ENCODE measurements at regions of chr7 and their contacts with region 1.

Region 1: DNA sequence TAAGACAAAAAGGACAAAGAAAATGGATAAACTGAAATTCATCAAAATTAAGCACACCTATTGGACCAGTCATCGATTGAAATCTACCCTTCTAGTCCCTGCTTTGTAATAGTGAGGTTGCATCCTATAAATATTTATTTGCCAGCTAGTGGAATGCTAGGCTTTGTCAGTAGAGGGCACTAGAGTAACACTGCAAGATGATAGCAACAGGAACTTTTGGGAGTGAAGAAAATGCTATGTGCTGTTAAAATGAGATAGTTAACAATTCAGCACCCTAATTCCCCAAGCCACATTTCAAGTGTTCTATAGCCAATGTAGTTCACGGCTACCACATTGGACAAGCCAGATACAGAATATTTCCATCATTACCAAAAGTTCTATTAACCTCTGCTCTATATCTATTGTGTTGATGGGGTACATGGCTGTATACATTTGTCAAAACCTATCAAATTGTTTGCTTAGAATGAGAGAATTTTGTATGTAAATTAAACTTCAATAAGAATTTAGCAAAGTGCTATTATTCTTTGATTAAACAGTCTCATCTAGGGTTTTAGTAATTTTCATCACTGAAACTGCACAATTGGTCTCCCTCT is 69.8 kb downstream of the LSMEM1 start:
- DNase-seq: peak; percentile 28
- ATAC-seq: peak; percentile 42
- H3K4me3 Mint-ChIP-seq: no peak overlapping the region
- H3K27ac Mint-ChIP-seq: no peak overlapping the region
- H3K4me1 Mint-ChIP-seq: no peaks in the 10 kb centered on the region
- H3K27me3 Mint-ChIP-seq: peaks cover 10% of the 10 kb centered on the region

Region 2: DNA sequence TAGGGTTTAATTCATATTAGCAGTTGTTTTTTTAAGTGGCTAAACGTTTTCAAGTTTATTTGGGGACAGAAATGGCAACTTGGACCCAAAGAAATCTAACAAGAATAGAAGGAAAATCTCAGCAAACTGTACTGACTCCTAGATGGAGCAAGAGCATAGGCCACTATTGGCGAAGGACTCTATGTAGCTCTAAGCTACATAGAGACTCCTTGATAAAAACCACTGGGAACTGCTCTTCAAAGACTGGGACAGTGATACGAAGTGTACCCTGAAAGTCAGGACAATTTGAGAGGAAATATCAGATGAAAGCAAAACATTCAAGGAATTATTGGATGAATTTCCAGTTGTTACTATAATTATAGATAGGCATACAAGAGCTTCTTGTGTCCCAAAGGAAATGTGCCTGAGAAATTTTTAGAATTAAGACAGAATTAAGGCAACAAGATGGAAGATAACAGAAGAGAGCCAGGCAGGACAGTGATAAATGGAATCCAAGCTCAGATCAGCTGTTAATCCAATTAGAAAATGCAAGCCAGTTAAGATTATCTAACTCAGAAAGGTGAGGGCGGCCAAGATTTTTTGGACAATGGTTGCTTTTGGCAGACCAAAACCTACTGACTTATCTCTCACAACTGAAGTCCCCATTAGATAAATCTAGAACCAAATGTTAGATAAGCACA is 204.0 kb before region 1 on chr7:
- CTCF ChIA-PET with region 1: no interaction called
- POLR2A ChIA-PET with region 1: no interaction called
- intact Hi-C with region 1: no loop called
- DNase-seq: no peak
- ATAC-seq: no peak
- H3K4me3 Mint-ChIP-seq: no peak overlapping the region
- H3K27ac Mint-ChIP-seq: no peak overlapping the region
- H3K4me1 Mint-ChIP-seq: no peaks in the 10 kb centered on the region
- H3K27me3 Mint-ChIP-seq: no peaks in the 10 kb centered on the region

Region 3: GRCh38 chr7:112789817-112790585 is 239.4 kb after region 1 on chr7 and contains the start of gene TMEM168:
- CTCF ChIA-PET with region 1: no interaction called
- POLR2A ChIA-PET with region 1: no interaction called
- intact Hi-C with region 1: loop called (anchors 5 to 10 kb)
- DNase-seq: peak; percentile 93
- ATAC-seq: peak; percentile 85
- H3K4me3 Mint-ChIP-seq: peak within 1 kb of the TSS; percentile 86
- H3K27ac Mint-ChIP-seq: peak within 1 kb of the TSS; percentile 96
- H3K4me1 Mint-ChIP-seq: peaks cover 44% of the 10 kb centered on the region
- H3K27me3 Mint-ChIP-seq: no peaks in the 10 kb centered on the region
- total RNA-seq, gene TMEM168: 16.7 to 18.3 TPM

Region 4: GRCh38 chr7:112898432-112899290 is 348.1 kb after region 1 on chr7:
- CTCF ChIA-PET with region 1: interaction called, 16 read pairs
- POLR2A ChIA-PET with region 1: no interaction called
- intact Hi-C with region 1: loop called (anchors 1 kb)
- DNase-seq: peak; percentile 56
- ATAC-seq: peak; percentile 60
- H3K4me3 Mint-ChIP-seq: no peak overlapping the region
- H3K27ac Mint-ChIP-seq: no peak overlapping the region
- H3K4me1 Mint-ChIP-seq: peaks cover 2% of the 10 kb centered on the region
- H3K27me3 Mint-ChIP-seq: no peaks in the 10 kb centered on the region

Region 5: DNA sequence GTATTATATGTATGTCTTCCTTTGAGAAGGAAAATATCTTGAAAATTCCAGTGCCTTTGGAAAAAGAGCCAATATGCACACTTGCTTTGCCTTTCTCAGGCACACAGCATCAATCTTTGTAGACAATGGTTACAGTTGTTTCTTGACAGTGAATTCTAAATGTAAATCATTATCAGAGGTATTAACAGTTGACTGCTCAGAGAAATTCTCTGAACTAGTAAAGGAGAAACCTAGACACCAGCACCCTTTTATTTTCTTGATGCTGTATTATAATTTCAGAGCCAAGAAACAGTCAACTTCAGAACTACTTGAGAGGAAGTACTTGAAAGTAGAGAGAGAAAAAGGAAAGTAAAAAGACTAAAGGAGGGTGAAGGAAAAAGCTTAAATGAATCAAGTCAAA is 753.5 kb after region 1 on chr7:
- CTCF ChIA-PET with region 1: no interaction called
- POLR2A ChIA-PET with region 1: no interaction called
- intact Hi-C with region 1: no loop called
- DNase-seq: no peak
- ATAC-seq: no peak
- H3K4me3 Mint-ChIP-seq: no peak overlapping the region
- H3K27ac Mint-ChIP-seq: no peak overlapping the region
- H3K4me1 Mint-ChIP-seq: no peaks in the 10 kb centered on the region
- H3K27me3 Mint-ChIP-seq: no peaks in the 10 kb centered on the region

Region 6: DNA sequence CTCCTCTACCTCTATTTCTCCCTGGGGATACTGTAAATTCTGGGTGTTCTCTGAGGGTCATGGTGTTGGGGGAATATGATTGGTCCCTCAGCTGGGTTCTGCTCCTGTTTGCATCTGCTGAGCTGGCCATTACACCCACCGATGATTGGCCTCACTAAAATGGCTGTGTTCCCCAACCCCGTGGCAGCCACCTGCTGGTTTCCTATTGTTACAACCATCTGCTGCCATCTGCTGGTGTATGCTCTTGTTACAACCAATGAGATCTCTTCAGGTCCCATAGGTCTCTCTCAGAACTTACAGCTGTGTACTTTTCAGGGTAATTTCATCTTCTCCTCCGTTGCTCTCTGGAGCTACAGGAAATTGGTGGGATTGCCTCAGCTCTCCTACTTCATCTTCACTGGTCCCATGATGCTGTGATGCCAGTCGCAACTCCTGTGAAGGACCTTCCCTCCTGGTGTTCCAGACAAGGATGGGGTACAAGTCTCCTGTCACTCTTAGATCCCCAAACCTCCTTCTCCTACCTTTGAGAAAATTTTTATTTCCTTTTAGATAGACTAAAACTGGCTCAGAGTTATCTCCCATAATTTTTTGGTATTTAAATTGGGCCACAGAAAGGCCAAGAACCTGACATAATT is 871.2 kb after region 1 on chr7:
- CTCF ChIA-PET with region 1: interaction called, 33 read pairs
- POLR2A ChIA-PET with region 1: no interaction called
- intact Hi-C with region 1: loop called (anchors 1 kb)
- DNase-seq: peak; percentile 88
- ATAC-seq: peak; percentile 99
- H3K4me3 Mint-ChIP-seq: no peak overlapping the region
- H3K27ac Mint-ChIP-seq: no peak overlapping the region
- H3K4me1 Mint-ChIP-seq: peaks cover 2% of the 10 kb centered on the region
- H3K27me3 Mint-ChIP-seq: peaks cover 2% of the 10 kb centered on the region

Region 7: DNA sequence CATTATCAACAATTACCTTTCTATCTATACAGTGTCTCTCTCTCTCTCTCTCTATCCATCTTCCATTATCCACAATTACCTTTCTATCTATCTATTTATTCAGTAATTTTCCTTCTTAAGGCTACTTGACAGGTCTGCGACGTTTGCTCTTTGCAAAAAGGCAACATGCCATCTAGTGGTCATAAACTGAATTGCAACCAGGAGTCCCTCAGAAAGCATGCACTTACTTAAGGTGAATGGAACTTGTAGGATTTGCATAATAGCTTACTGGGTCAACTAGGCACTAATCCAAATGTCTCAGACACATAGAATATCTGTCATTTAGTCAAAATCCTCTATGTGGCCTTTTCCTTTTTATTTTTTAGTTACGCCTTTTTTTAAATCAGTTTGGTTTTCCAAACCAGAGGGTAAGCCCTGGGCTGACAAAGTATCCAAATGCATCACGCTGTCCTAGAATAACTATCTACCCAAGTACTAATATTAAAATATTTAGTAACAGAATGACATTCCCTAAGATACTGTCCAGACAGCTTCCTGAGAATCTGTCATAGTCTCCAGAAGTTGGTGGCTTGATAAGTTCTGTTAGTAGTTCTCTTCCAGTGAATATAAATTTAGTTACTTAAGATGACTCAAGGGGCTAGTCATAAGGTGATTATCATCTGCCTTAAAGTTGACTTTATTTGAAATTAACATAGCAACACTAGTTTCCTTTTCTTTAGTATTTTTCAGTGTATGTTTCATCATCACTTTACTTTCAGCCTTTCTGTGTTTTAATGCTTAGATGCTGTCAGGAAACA is 1159.9 kb after region 1 on chr7:
- CTCF ChIA-PET with region 1: interaction called, 3 read pairs
- POLR2A ChIA-PET with region 1: no interaction called
- intact Hi-C with region 1: loop called in 1 of 2 experiments (anchors 1 kb)
- DNase-seq: peak; percentile 45
- ATAC-seq: peak; percentile 47
- H3K4me3 Mint-ChIP-seq: no peak overlapping the region
- H3K27ac Mint-ChIP-seq: no peak overlapping the region
- H3K4me1 Mint-ChIP-seq: no peaks in the 10 kb centered on the region
- H3K27me3 Mint-ChIP-seq: peaks cover 8% of the 10 kb centered on the region

Measured in activated CD4-positive, alpha-beta T cell treated with anti-CD3 and anti-CD28 coated beads for 36 hours (primary cell).